ENCODE measurements at regions of chr6 and their contacts with region 1.

Region 1: GRCh38 chr6:26322645-26323482 is 42.1 kb upstream of the BTN3A2 start:
- DNase-seq: peak in 3 of 4 experiments; percentile 43 to 96 (median 81)
- ATAC-seq: peak; percentile 62
- H3K4me3 ChIP-seq: peak overlapping the region; percentile 59
- H3K27ac ChIP-seq: peak overlapping the region; percentile 75
- H3K4me1 ChIP-seq: peaks cover 8 to 24% of the 10 kb centered on the region in 2 experiments
- H3K27me3 ChIP-seq: no peaks in the 10 kb centered on the region
- CTCF ChIP-seq: no peak
- EP300 ChIP-seq: peak; percentile 54
- POLR2A ChIP-seq: no peak
- RAD21 ChIP-seq: peak in 1 of 2 experiments; percentile 27; a peak in 1 of 4 replicates

Region 2: GRCh38 chr6:26065952-26066380 is 256.9 kb before region 1 on chr6:
- CTCF ChIA-PET with region 1: no interaction called
- POLR2A ChIA-PET with region 1: no interaction called
- in situ Hi-C with region 1: no loop called
- intact Hi-C with region 1: loop called (anchors 10 kb)
- DNase-seq: peak; percentile 80 to 91 (median 84)
- ATAC-seq: peak; percentile 91
- H3K4me3 ChIP-seq: no peak overlapping the region
- H3K27ac ChIP-seq: peak overlapping the region; percentile 70
- H3K4me1 ChIP-seq: peaks cover under 1 to 6% of the 10 kb centered on the region in 2 experiments; a peak in 2 of 5 replicates
- H3K27me3 ChIP-seq: no peaks in the 10 kb centered on the region
- CTCF ChIP-seq: peak; percentile 89 to 98 (median 93)
- EP300 ChIP-seq: peak; percentile 32; the same call in 1 of the 2 replicates
- POLR2A ChIP-seq: no peak
- RAD21 ChIP-seq: peak; percentile 99

Region 3: GRCh38 chr6:26183581-26184366 is 139.1 kb before region 1 on chr6:
- CTCF ChIA-PET with region 1: no interaction called
- POLR2A ChIA-PET with region 1: interaction called, 10 read pairs
- in situ Hi-C with region 1: no loop called
- intact Hi-C with region 1: no loop called
- DNase-seq: no peak
- ATAC-seq: no peak
- H3K4me3 ChIP-seq: no peak overlapping the region
- H3K27ac ChIP-seq: no peak overlapping the region
- H3K4me1 ChIP-seq: peaks cover 0 to 18% of the 10 kb centered on the region in 2 experiments; a peak in 4 of 5 replicates
- H3K27me3 ChIP-seq: no peaks in the 10 kb centered on the region
- CTCF ChIP-seq: no peak
- EP300 ChIP-seq: no peak
- POLR2A ChIP-seq: no peak
- RAD21 ChIP-seq: no peak

Region 4: DNA sequence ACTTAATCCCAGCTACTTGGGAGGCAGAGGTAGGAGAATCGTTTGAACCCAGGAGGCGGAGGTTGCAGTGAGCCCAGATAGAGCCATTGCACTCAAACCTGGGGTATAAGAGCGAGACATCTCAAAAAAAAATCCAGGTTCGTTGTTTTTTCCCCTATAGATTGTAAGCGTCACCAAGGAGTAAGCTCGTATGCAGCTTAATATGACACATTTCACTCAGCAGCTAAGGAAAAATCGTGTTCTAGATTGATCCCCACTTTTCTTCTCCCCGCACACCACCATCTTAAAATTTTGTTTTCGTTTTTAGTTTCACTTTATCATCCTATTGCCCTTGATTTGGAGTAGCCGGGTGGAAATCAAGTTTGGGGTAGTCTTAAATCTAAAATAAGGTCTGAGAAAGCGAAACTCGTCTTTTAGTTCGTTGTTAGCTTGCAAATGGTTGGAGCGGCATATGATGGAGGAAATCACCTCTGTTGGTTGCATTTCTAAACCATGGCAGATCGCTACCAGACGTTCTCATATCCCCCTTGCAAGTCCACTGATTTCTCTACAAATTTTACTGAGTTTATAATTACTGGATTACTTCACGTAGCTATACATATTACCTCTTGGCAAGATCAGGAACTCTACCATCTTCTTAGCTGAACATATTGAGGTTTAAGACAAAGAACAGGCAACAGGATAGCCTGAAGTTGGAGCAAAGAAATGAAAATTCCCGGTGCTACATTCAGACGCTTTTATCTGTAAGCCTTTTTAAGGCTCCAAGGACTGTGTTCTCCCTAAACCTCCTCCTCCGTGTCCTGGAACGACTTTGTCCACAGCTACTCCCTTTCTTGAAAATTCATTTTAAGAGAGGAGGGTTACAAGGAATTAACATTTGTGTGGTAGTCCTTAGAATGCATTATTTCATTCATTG is 48.9 kb before region 1 on chr6:
- CTCF ChIA-PET with region 1: no interaction called
- POLR2A ChIA-PET with region 1: no interaction called
- in situ Hi-C with region 1: no loop called
- intact Hi-C with region 1: no loop called
- DNase-seq: no peak
- ATAC-seq: no peak
- H3K4me3 ChIP-seq: no peak overlapping the region
- H3K27ac ChIP-seq: no peak overlapping the region
- H3K4me1 ChIP-seq: peaks cover 0 to 3% of the 10 kb centered on the region in 2 experiments; a peak in 1 of 5 replicates
- H3K27me3 ChIP-seq: no peaks in the 10 kb centered on the region
- CTCF ChIP-seq: no peak
- EP300 ChIP-seq: no peak
- POLR2A ChIP-seq: no peak
- RAD21 ChIP-seq: no peak

Region 5: GRCh38 chr6:26295691-26296555 is 26.9 kb before region 1 on chr6:
- CTCF ChIA-PET with region 1: no interaction called
- POLR2A ChIA-PET with region 1: interaction called, 11 read pairs
- in situ Hi-C with region 1: no loop called
- intact Hi-C with region 1: no loop called
- DNase-seq: peak; percentile 75 to 95 (median 79)
- ATAC-seq: peak; percentile 63
- H3K4me3 ChIP-seq: no peak overlapping the region
- H3K27ac ChIP-seq: peak overlapping the region; percentile 86
- H3K4me1 ChIP-seq: peaks cover 0 to 45% of the 10 kb centered on the region in 2 experiments; a peak in 4 of 5 replicates
- H3K27me3 ChIP-seq: no peaks in the 10 kb centered on the region
- CTCF ChIP-seq: no peak
- EP300 ChIP-seq: peak; percentile 97
- POLR2A ChIP-seq: no peak
- RAD21 ChIP-seq: peak; percentile 15 to 46; a peak in 2 of 4 replicates

Region 6: GRCh38 chr6:26375270-26375669 is 52.4 kb after region 1 on chr6:
- CTCF ChIA-PET with region 1: no interaction called
- POLR2A ChIA-PET with region 1: no interaction called
- in situ Hi-C with region 1: no loop called
- intact Hi-C with region 1: no loop called
- DNase-seq: no peak
- ATAC-seq: peak; percentile 31
- H3K4me3 ChIP-seq: no peak overlapping the region
- H3K27ac ChIP-seq: no peak overlapping the region
- H3K4me1 ChIP-seq: peaks cover 10 to 24% of the 10 kb centered on the region in 2 experiments; a peak in 4 of 5 replicates
- H3K27me3 ChIP-seq: no peaks in the 10 kb centered on the region
- CTCF ChIP-seq: no peak
- EP300 ChIP-seq: no peak
- POLR2A ChIP-seq: no peak
- RAD21 ChIP-seq: no peak

Region 7: DNA sequence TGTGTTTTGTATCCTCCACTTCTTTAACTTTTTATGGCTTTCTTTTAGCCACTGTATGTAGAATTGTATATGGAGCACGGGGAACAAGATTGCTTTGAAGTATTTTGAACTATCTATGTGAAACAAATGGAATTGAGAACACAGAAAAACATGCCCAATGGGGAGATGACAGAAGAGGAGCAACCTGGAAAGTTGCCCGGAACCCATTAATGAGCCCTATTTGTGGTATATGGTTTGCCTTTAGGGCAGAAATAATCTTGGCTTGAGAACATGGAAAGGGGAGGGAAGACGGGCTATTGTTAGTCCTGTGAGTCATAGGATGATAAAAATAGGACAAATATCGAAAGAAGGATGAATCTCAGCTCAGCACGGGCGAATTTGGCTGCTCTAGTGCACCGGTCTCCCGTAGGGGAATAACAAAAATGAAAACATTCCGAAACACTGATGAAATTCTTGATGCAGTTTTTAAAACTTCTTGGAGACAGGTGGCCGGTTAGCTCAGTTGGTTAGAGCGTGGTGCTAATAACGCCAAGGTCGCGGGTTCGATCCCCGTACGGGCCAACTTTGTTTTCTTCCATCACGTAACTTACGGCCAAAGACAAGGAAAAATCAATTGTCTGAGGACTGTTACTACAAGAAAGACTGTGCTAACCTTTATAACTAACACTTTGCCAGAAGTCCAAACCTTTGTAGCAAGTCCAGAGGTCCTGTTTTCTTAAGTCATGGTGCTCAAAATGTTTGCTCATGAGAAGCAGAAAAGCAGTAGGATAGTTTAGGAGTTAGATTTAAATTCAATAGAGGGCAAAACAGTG is 231.0 kb after region 1 on chr6:
- CTCF ChIA-PET with region 1: no interaction called
- POLR2A ChIA-PET with region 1: no interaction called
- in situ Hi-C with region 1: no loop called
- intact Hi-C with region 1: loop called (anchors 2 kb)
- DNase-seq: peak; percentile 62 to 93 (median 72)
- ATAC-seq: peak; percentile 66
- H3K4me3 ChIP-seq: peak overlapping the region; percentile 51
- H3K27ac ChIP-seq: peak overlapping the region; percentile 74
- H3K4me1 ChIP-seq: peaks cover 5 to 20% of the 10 kb centered on the region in 2 experiments; a peak in 4 of 5 replicates
- H3K27me3 ChIP-seq: no peaks in the 10 kb centered on the region
- CTCF ChIP-seq: no peak
- EP300 ChIP-seq: peak; percentile 73; the same call in 1 of the 2 replicates
- POLR2A ChIP-seq: no peak
- RAD21 ChIP-seq: no peak; a peak in 1 of 4 replicates